B cell (primary cell): ENCODE measurements at regions of chr1 and their contacts with region 1.

Region 1: DNA sequence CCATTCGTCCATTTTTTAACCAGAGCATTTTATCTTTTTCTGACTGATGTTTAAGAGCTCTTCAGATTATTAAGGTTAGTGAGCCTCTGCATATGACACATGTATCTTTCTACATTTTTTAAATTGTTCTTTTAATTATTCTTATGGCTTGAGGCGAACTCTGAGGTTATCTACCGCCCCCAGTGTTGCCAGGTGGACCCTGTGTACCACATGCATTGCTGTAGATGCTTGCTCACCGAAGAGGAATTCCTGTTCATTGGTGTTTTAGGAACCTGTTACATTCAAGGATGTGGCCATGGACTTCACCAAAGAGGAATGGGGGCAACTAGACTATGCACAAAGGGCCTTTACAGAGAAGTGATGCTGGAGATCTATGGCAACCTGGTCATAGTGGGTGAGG is 31.8 kb downstream of the ZNF684 start:
- DNase-seq: no peak
- ATAC-seq: no peak
- H3K4me3 ChIP-seq: no peak overlapping the region
- H3K4me3 Mint-ChIP-seq: no peak overlapping the region
- H3K27ac ChIP-seq: no peak overlapping the region
- H3K27ac Mint-ChIP-seq: no peak overlapping the region
- H3K4me1 ChIP-seq: no peaks in the 10 kb centered on the region
- H3K4me1 Mint-ChIP-seq: no peaks in the 10 kb centered on the region
- H3K27me3 ChIP-seq: peaks cover 0 to 2% (median 0%) of the 10 kb centered on the region in 4 experiments
- H3K27me3 Mint-ChIP-seq: peaks cover 21% of the 10 kb centered on the region
- CTCF ChIP-seq: no peak

Region 2: GRCh38 chr1:40462956-40463590 is 100.2 kb before region 1 on chr1:
- CTCF ChIA-PET with region 1: no interaction called
- POLR2A ChIA-PET with region 1: no interaction called
- intact Hi-C with region 1: no loop called
- DNase-seq: peak; percentile 29
- ATAC-seq: no peak
- H3K4me3 ChIP-seq: no peak overlapping the region
- H3K4me3 Mint-ChIP-seq: no peak overlapping the region
- H3K27ac ChIP-seq: no peak overlapping the region
- H3K27ac Mint-ChIP-seq: no peak overlapping the region
- H3K4me1 ChIP-seq: no peaks in the 10 kb centered on the region
- H3K4me1 Mint-ChIP-seq: no peaks in the 10 kb centered on the region
- H3K27me3 ChIP-seq: no peaks in the 10 kb centered on the region
- H3K27me3 Mint-ChIP-seq: no peaks in the 10 kb centered on the region
- CTCF ChIP-seq: no peak

Region 3: DNA sequence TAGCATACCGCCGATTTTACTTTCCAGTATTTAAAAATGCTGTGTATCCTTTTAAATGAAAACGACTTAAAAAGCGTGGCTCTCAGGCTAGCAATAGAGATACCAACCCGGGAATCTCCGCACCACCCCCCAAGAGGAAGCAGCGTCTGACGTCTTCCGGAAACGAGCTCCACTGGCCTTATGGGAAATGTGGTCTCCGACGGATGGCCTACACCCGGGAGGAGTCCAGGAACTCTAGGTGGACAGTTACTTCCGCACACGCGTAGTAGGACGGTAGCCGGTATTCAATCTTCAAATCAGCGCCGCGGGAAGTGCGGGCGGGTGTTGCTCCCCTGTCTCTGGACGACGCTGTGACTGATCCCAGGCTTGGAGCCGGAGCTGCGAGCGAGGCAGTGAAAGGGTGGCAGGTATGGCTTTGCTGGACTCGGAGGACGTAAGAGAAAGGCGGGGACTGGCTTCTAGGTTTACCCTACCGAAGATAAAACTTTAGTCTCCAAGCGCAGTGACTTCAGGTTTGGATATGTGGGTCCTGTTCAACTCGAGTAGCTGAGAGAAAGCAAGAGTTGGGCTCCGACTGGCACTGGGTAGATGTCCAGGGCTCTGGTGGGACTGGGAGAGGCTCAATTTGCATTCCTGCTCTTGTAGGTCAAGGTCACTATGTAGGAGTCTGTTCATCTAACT is 31.7 kb before region 1 on chr1 and contains the start of gene ZNF684:
- CTCF ChIA-PET with region 1: no interaction called
- POLR2A ChIA-PET with region 1: no interaction called
- intact Hi-C with region 1: no loop called
- DNase-seq: peak; percentile 91
- ATAC-seq: peak; percentile 98
- H3K4me3 ChIP-seq: peak within 1 kb of the TSS; percentile 50 to 94 (median 80)
- H3K4me3 Mint-ChIP-seq: peak within 1 kb of the TSS; percentile 100
- H3K27ac ChIP-seq: peak within 1 kb of the TSS; percentile 60 to 92
- H3K27ac Mint-ChIP-seq: peak within 1 kb of the TSS; percentile 96
- H3K4me1 ChIP-seq: peaks cover 19 to 22% of the 10 kb centered on the region in 2 donors
- H3K4me1 Mint-ChIP-seq: peaks cover 26% of the 10 kb centered on the region
- H3K27me3 ChIP-seq: peaks cover 0 to 3% (median 1%) of the 10 kb centered on the region in 4 experiments
- H3K27me3 Mint-ChIP-seq: peaks cover 5% of the 10 kb centered on the region
- CTCF ChIP-seq: no peak
- total RNA-seq, gene ZNF684: 6.3 and 7.4 TPM in 2 replicates

Region 4: GRCh38 chr1:40553017-40553416 is 10.2 kb before region 1 on chr1:
- CTCF ChIA-PET with region 1: no interaction called
- POLR2A ChIA-PET with region 1: no interaction called
- intact Hi-C with region 1: loop called (anchors 1 kb)
- DNase-seq: no peak
- ATAC-seq: no peak
- H3K4me3 ChIP-seq: no peak overlapping the region
- H3K4me3 Mint-ChIP-seq: no peak overlapping the region
- H3K27ac ChIP-seq: no peak overlapping the region
- H3K27ac Mint-ChIP-seq: no peak overlapping the region
- H3K4me1 ChIP-seq: no peaks in the 10 kb centered on the region
- H3K4me1 Mint-ChIP-seq: no peaks in the 10 kb centered on the region
- H3K27me3 ChIP-seq: no peaks in the 10 kb centered on the region
- H3K27me3 Mint-ChIP-seq: peaks cover 2% of the 10 kb centered on the region
- CTCF ChIP-seq: no peak